Activated B cell treated with CpG ODN at 0.5 μM for 24 hours (primary cell): ENCODE measurements at regions of chr1 and their contacts with region 1.

Region 1: DNA sequence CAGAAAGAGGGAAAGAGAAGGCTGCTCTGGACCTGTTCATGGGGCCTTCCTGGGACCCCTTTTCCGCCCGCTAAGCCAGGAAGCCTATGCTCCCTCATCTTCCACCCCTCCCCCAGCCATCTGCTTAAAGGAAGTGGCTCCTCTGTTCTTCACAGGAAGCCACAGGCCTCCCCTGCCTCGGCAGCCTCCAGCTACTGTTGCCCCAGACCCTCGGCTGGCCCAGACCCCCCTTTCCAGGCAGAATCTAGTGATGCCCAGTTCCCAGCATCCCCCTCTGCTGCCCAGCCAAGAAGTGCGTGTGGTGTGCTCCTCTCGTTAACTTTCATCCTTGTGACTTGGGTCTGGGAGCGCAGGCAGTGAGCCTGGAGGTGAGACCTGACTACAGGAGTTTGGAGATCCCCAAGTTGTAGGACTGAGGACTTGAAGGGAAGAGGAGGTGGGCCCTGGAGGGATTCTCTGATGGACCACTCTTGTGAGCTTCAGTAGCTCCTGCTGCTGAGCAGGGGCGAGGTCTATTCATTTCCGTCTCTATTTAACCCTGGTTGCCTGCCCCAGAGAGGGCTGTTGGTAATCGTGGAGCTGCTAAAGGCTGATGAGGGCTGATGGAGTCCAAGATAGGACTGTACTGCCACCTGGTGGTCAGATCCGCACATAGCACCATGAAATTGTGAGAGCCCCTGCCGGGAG is 9.1 kb downstream of the IFI6 start:
- DNase-seq: peak; percentile 88
- ATAC-seq: peak; percentile 53
- H3K4me3 Mint-ChIP-seq: peak overlapping the region; percentile 72
- H3K27ac Mint-ChIP-seq: peak overlapping the region; percentile 100
- H3K4me1 Mint-ChIP-seq: peaks cover 51% of the 10 kb centered on the region
- H3K27me3 Mint-ChIP-seq: no peaks in the 10 kb centered on the region
- CTCF ChIP-seq: no peak

Region 2: DNA sequence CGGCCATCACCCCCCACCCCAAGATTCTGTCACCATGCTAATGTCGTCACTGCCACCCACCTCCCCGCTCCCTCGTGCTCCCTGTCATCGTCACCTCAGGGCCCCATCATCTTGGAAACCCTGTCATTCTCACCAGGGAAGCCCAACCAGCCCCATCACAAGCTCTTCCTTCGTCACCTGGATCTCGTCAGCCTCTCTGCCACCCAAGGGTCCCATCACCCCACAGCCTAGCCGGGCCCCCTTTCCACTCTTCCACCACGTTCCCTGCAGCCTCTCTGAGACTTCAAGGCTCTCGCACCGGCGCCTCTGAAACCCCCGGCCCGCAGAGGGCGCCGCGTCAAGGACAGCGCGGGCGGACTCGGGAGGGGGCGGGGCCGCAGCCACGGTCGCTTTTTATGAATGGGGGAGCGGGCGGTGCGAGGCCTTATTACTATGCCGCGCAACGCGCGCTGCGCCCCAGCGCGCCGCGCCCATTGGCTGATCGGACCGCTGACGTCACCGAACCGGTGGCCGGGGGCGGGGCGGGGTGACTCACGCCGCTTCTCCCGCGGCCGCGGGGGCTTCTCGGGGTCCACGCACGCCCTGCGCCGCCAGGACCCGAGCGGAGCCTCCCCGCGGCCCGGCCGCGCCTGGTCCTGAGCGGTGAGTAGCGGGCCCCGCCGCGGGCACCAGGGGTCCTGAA is 270.6 kb before region 1 on chr1 and contains the start of gene GPR3:
- CTCF ChIA-PET with region 1: interaction called, 10 read pairs
- POLR2A ChIA-PET with region 1: interaction called, 7 read pairs
- intact Hi-C with region 1: loop called (anchors 1 kb)
- DNase-seq: peak; percentile 91
- ATAC-seq: peak; percentile 91
- H3K4me3 Mint-ChIP-seq: peak within 1 kb of the TSS; percentile 82
- H3K27ac Mint-ChIP-seq: peak within 1 kb of the TSS; percentile 60
- H3K4me1 Mint-ChIP-seq: peaks cover 18% of the 10 kb centered on the region
- H3K27me3 Mint-ChIP-seq: no peaks in the 10 kb centered on the region
- CTCF ChIP-seq: no peak
- total RNA-seq, gene GPR3: 0.11 TPM in 1 of 2 replicates, not detected in the other

Region 3: GRCh38 chr1:27525296-27526272 is 137.3 kb before region 1 on chr1:
- CTCF ChIA-PET with region 1: no interaction called
- POLR2A ChIA-PET with region 1: interaction called, 3 read pairs
- intact Hi-C with region 1: loop called (anchors 1 kb)
- DNase-seq: peak; percentile 51
- ATAC-seq: peak; percentile 64
- H3K4me3 Mint-ChIP-seq: peak overlapping the region; percentile 41
- H3K27ac Mint-ChIP-seq: peak overlapping the region; percentile 79
- H3K4me1 Mint-ChIP-seq: peaks cover 76% of the 10 kb centered on the region
- H3K27me3 Mint-ChIP-seq: no peaks in the 10 kb centered on the region
- CTCF ChIP-seq: no peak

Region 4: GRCh38 chr1:27542408-27543273 is 120.2 kb before region 1 on chr1:
- CTCF ChIA-PET with region 1: no interaction called
- POLR2A ChIA-PET with region 1: no interaction called
- intact Hi-C with region 1: no loop called
- DNase-seq: no peak
- ATAC-seq: peak; percentile 62
- H3K4me3 Mint-ChIP-seq: no peak overlapping the region
- H3K27ac Mint-ChIP-seq: no peak overlapping the region
- H3K4me1 Mint-ChIP-seq: peaks cover 1% of the 10 kb centered on the region
- H3K27me3 Mint-ChIP-seq: no peaks in the 10 kb centered on the region
- CTCF ChIP-seq: no peak

Region 5: DNA sequence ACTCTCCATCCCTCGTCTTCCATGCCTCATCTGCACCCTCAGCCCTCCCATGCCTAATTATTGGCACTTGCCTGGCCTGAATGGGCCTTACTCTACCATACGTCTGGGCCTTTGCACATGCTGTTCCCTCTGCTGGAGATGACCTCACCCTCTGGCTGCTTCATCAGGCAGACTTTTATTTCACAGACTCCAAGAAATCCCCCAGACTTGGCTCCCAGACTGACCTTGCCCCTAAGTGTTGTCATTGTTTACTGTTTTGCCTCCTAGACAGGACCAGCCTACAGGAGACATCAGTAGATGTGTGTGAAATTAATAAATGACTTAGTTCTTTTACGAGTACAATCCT is 53.7 kb before region 1 on chr1:
- CTCF ChIA-PET with region 1: interaction called, 253 read pairs
- POLR2A ChIA-PET with region 1: interaction called, 207 read pairs
- intact Hi-C with region 1: loop called (anchors 1 kb)
- DNase-seq: no peak
- ATAC-seq: peak; percentile 18
- H3K4me3 Mint-ChIP-seq: no peak overlapping the region
- H3K27ac Mint-ChIP-seq: no peak overlapping the region
- H3K4me1 Mint-ChIP-seq: peaks cover 15% of the 10 kb centered on the region
- H3K27me3 Mint-ChIP-seq: no peaks in the 10 kb centered on the region
- CTCF ChIP-seq: no peak

Region 6: GRCh38 chr1:27643701-27644625 is 18.9 kb before region 1 on chr1:
- CTCF ChIA-PET with region 1: interaction called, 30 read pairs
- POLR2A ChIA-PET with region 1: interaction called, 29 read pairs
- intact Hi-C with region 1: loop called (anchors 1 kb)
- DNase-seq: peak; percentile 53
- ATAC-seq: peak; percentile 99
- H3K4me3 Mint-ChIP-seq: no peak overlapping the region
- H3K27ac Mint-ChIP-seq: peak overlapping the region; percentile 46
- H3K4me1 Mint-ChIP-seq: peaks cover 15% of the 10 kb centered on the region
- H3K27me3 Mint-ChIP-seq: no peaks in the 10 kb centered on the region
- CTCF ChIP-seq: no peak